CD4-positive, alpha-beta T cell (primary cell): ENCODE measurements at regions of chr11 and their contacts with region 1.

Region 1: GRCh38 chr11:65314501-65315203 is at the start of gene CDC42EP2:
- DNase-seq: peak; percentile 35 to 86 (median 72)
- ATAC-seq: peak; percentile 89
- H3K4me3 ChIP-seq: peak within 1 kb of the TSS; percentile 90
- H3K4me3 Mint-ChIP-seq: peak within 1 kb of the TSS; percentile 86
- H3K27ac ChIP-seq: no peak within 1 kb of the TSS
- H3K27ac Mint-ChIP-seq: no peak within 1 kb of the TSS
- H3K4me1 ChIP-seq: peaks cover 21% of the 10 kb centered on the region
- H3K4me1 Mint-ChIP-seq: peaks cover 12% of the 10 kb centered on the region
- H3K27me3 ChIP-seq: peaks cover 0 to 2% of the 10 kb centered on the region in 2 experiments
- H3K27me3 Mint-ChIP-seq: no peaks in the 10 kb centered on the region
- CTCF ChIP-seq: no peak
- total RNA-seq, gene CDC42EP2: 0.96 TPM in 1 of 2 experiments, not detected in the other

Region 2: GRCh38 chr11:65204646-65205601 is 109.7 kb before region 1 on chr11:
- CTCF ChIA-PET with region 1: interaction called, 3 read pairs
- POLR2A ChIA-PET with region 1: no interaction called
- intact Hi-C with region 1: loop called in 1 of 2 experiments (anchors 1 kb)
- DNase-seq: peak in 13 of 14 experiments; percentile 20 to 74 (median 39)
- ATAC-seq: peak; percentile 76
- H3K4me3 ChIP-seq: no peak overlapping the region
- H3K4me3 Mint-ChIP-seq: no peak overlapping the region
- H3K27ac ChIP-seq: no peak overlapping the region
- H3K27ac Mint-ChIP-seq: no peak overlapping the region
- H3K4me1 ChIP-seq: no peaks in the 10 kb centered on the region
- H3K4me1 Mint-ChIP-seq: no peaks in the 10 kb centered on the region
- H3K27me3 ChIP-seq: no peaks in the 10 kb centered on the region
- H3K27me3 Mint-ChIP-seq: no peaks in the 10 kb centered on the region
- CTCF ChIP-seq: peak; percentile 91

Region 3: DNA sequence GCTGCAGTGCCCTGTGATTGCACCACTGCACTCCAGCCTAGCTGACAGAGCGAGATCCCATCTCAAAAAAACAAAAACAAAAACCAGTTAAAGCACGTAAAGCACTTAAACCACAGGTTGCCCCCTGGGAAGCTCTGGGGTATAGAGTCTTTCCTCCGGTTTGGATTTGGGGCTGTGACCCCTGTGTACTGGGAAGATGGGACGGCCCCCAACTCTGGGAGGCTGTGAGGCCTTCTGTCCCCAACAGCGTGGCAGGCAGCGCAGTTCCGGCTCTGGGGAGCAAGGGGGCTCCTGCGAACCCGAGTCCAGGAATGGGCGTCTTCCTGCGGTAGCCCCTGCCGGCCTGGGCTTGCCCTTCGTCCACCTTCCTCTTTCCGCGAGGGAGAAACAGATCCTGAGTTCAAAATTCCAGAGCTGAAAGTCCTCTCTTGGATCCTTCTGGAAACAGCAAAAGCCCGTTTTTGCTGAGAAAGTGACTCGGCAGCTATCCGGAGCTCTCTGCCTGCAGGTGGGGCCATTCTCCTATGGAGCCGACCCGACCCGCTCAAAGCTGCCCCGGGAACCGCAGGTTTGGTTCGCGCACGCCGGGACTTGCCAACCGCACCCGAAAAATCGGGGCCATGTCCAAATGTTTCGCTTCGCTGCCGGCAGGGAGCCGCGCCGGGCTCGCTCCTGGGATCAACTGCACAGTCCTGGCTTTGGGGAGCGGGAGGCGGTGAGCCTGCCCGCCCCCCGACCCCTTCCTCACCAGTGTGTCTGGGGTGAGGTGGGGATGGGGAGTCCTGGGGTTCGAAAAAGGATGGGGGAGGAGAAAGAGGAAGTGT is 89.2 kb before region 1 on chr11:
- CTCF ChIA-PET with region 1: interaction called, 35 read pairs
- POLR2A ChIA-PET with region 1: interaction called, 14 read pairs
- intact Hi-C with region 1: loop called (anchors 1 kb)
- DNase-seq: peak; percentile 42 to 80 (median 58)
- ATAC-seq: peak; percentile 92
- H3K4me3 ChIP-seq: peak overlapping the region; percentile 49
- H3K4me3 Mint-ChIP-seq: peak overlapping the region; percentile 68
- H3K27ac ChIP-seq: no peak overlapping the region
- H3K27ac Mint-ChIP-seq: no peak overlapping the region
- H3K4me1 ChIP-seq: peaks cover 14% of the 10 kb centered on the region
- H3K4me1 Mint-ChIP-seq: peaks cover 12% of the 10 kb centered on the region
- H3K27me3 ChIP-seq: peaks cover 14 to 17% of the 10 kb centered on the region in 2 experiments
- H3K27me3 Mint-ChIP-seq: peaks cover 24% of the 10 kb centered on the region
- CTCF ChIP-seq: no peak

Region 4: DNA sequence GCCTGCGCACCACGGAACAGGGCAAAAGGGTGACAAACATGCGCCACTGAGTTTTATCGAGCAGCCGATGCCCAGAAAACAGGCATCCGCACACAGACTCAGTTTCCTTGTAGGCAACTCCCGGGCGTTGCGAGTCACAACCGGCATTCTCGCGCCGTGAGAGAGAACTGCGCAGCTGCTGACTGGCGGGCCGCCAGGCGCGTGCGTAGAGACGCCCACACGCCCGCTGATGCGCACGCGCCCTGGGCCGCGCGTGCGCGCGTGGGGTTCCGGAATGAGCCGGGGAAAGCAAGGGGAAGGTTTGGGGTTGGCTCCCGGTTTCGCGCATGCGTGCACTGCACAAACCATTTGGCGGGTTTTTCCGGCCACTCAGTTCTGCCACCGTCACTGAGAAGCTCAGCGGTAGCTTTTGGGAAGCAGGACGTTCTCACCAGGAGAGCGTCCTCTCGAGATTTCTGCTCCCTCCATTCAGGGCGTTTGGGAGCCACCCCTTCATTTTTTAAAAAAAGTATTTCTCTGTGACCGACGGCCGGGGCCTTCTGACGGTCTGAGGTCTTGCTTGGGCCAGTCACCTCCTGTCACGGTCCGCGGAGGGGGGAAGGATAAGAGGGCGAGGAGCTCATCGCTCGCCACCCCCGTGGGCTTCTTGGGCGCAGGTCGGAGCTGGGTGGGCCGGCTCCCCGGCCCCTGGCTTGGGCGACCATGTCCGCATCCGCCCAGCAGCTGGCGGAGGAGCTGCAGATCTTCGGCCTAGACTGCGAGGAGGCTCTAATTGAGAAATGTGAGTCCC is 52.9 kb before region 1 on chr11 and contains the start of gene POLA2:
- CTCF ChIA-PET with region 1: interaction called, 5 read pairs
- POLR2A ChIA-PET with region 1: interaction called, 11 read pairs
- intact Hi-C with region 1: no loop called
- DNase-seq: peak; percentile 90 to 99 (median 96)
- ATAC-seq: peak; percentile 88
- H3K4me3 ChIP-seq: peak within 1 kb of the TSS; percentile 84
- H3K4me3 Mint-ChIP-seq: peak within 1 kb of the TSS; percentile 92
- H3K27ac ChIP-seq: peak within 1 kb of the TSS; percentile 84 to 89
- H3K27ac Mint-ChIP-seq: peak within 1 kb of the TSS; percentile 91
- H3K4me1 ChIP-seq: peaks cover 31% of the 10 kb centered on the region
- H3K4me1 Mint-ChIP-seq: peaks cover 54% of the 10 kb centered on the region
- H3K27me3 ChIP-seq: no peaks in the 10 kb centered on the region
- H3K27me3 Mint-ChIP-seq: no peaks in the 10 kb centered on the region
- CTCF ChIP-seq: no peak
- total RNA-seq, gene POLA2: 9.6 to 10.6 TPM

Region 5: DNA sequence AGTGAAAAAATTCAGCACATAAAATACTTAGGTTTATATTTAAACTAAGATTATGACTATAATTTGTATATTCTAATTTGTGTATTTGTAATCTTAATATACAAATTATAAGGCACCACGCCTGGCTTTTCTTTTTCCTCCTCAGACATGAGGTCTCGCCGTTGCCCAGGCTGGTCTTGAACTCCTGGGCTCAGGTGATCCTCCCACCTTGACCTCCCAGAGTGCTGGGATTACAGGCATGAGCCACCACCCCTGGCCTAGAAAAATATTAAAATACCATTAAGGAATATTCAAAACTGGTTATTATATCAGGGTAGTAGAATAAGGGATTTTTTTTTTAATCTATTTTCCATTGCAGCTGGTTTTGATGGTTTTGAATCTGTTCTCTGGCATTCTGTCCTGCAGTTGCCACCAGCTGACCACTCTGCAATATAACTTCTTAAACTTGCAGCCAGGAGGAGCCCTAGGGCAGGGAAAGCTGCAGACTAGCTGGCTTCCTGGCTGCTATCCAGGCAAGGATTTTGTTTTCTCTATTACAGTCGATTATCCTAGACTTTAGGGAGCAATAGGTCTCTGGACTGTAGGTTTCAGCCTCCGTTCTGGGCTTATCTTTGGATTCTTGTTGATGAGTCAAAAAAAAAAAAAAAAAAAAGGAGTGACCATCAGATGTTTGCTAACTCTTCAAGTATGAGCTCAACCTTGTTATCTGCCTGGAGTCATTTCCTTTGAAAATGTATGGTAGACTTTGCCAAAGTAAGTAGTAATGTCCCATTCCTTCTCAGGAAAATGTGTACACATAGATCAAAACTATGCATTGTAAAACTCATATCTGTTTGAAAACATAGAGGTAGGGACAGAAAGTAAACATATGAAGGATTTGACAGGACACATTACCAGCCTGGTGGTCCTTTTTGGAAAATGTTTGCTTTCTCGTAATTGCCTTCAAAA is 39.6 kb before region 1 on chr11:
- CTCF ChIA-PET with region 1: interaction called, 37 read pairs
- POLR2A ChIA-PET with region 1: interaction called, 7 read pairs
- intact Hi-C with region 1: loop called (anchors 1 to 2 kb)
- DNase-seq: peak in 7 of 14 experiments; percentile 7 to 67 (median 46)
- ATAC-seq: no peak
- H3K4me3 ChIP-seq: no peak overlapping the region
- H3K4me3 Mint-ChIP-seq: no peak overlapping the region
- H3K27ac ChIP-seq: no peak overlapping the region
- H3K27ac Mint-ChIP-seq: no peak overlapping the region
- H3K4me1 ChIP-seq: no peaks in the 10 kb centered on the region
- H3K4me1 Mint-ChIP-seq: peaks cover 8% of the 10 kb centered on the region
- H3K27me3 ChIP-seq: no peaks in the 10 kb centered on the region
- H3K27me3 Mint-ChIP-seq: no peaks in the 10 kb centered on the region
- CTCF ChIP-seq: peak; percentile 57

Region 6: DNA sequence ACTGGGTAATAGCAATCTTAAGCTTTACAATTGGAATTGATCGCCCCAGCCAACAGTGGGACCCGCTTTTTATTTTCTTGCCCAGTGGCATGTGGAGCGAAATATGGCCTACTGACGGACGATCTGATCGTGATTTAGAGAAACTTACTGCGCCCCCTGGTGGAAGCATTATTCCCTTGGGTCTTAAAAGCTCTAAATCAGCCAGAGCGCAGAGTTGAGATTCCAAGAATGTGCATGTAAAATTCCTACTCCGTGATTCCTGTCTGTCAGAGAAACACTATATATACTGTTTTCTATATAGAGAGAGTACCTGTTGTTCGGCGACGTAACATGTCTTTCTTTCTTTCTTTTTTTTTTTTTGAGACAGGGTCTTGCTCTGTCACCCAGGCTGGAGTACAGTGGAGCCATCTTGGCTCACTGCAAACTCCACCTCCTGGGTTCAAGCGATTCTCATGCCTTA is 15.3 kb after region 1 on chr11:
- CTCF ChIA-PET with region 1: interaction called, 55 read pairs
- POLR2A ChIA-PET with region 1: interaction called, 16 read pairs
- intact Hi-C with region 1: loop called in 1 of 2 experiments (anchors 2 kb)
- DNase-seq: peak; percentile 56 to 93 (median 79)
- ATAC-seq: peak; percentile 28
- H3K4me3 ChIP-seq: no peak overlapping the region
- H3K4me3 Mint-ChIP-seq: peak overlapping the region; percentile 79
- H3K27ac ChIP-seq: no peak overlapping the region
- H3K27ac Mint-ChIP-seq: peak overlapping the region; percentile 15
- H3K4me1 ChIP-seq: peaks cover 12% of the 10 kb centered on the region
- H3K4me1 Mint-ChIP-seq: peaks cover 21% of the 10 kb centered on the region
- H3K27me3 ChIP-seq: no peaks in the 10 kb centered on the region
- H3K27me3 Mint-ChIP-seq: no peaks in the 10 kb centered on the region
- CTCF ChIP-seq: peak; percentile 97